ENCODE measurements at regions of chr1 and their contacts with region 1.

Region 1: GRCh38 chr1:200409761-200410565 is at the start of gene ZNF281:
- DNase-seq: peak; percentile 89 to 95 (median 93)
- ATAC-seq: peak; percentile 99
- H3K4me3 ChIP-seq: peak within 1 kb of the TSS; percentile 69
- H3K4me3 Mint-ChIP-seq: peak within 1 kb of the TSS; percentile 93 to 100 (median 98)
- H3K27ac ChIP-seq: peak within 1 kb of the TSS; percentile 86
- H3K27ac Mint-ChIP-seq: peak within 1 kb of the TSS; percentile 92 to 99 (median 97)
- H3K4me1 ChIP-seq: peaks cover 36 to 37% of the 10 kb centered on the region in 2 donors
- H3K4me1 Mint-ChIP-seq: peaks cover 36 to 63% (median 54%) of the 10 kb centered on the region in 7 donors
- H3K27me3 ChIP-seq: no peaks in the 10 kb centered on the region
- H3K27me3 Mint-ChIP-seq: peaks cover 0 to 12% (median 0%) of the 10 kb centered on the region in 5 donors
- total RNA-seq, gene ZNF281: 16.3 to 27.6 (median 25.8) TPM

Region 2: DNA sequence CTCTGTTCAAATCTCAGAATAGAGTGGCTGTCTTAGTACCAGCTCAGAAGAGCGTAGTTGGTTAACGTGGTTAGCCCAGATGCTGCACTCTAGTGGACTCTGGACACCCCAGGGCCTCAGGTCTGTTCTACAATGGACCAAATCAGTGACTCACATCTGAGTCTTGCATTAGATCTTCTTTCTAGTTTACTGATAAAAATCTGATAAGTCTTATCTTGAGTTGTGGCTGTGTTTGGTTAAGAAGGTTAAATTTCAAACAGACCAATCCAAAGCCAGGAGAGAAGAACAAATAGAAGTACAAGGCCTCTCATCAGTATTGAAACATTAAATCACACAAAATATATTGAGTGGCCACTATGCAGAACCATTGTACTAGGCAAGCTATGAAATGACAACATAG is 278.3 kb before region 1 on chr1:
- CTCF ChIA-PET with region 1: no interaction called
- POLR2A ChIA-PET with region 1: no interaction called
- intact Hi-C with region 1: no loop called
- DNase-seq: no peak
- ATAC-seq: peak; percentile 51
- H3K4me3 ChIP-seq: no peak overlapping the region
- H3K4me3 Mint-ChIP-seq: no peak overlapping the region
- H3K27ac ChIP-seq: no peak overlapping the region
- H3K27ac Mint-ChIP-seq: peak overlapping the region in 1 of 9 donors; percentile 32
- H3K4me1 ChIP-seq: peaks cover 6 to 18% of the 10 kb centered on the region in 2 donors
- H3K4me1 Mint-ChIP-seq: peaks cover 0 to 20% (median 14%) of the 10 kb centered on the region in 7 donors
- H3K27me3 ChIP-seq: no peaks in the 10 kb centered on the region
- H3K27me3 Mint-ChIP-seq: peaks cover 0 to 5% (median 0%) of the 10 kb centered on the region in 5 donors

Region 3: DNA sequence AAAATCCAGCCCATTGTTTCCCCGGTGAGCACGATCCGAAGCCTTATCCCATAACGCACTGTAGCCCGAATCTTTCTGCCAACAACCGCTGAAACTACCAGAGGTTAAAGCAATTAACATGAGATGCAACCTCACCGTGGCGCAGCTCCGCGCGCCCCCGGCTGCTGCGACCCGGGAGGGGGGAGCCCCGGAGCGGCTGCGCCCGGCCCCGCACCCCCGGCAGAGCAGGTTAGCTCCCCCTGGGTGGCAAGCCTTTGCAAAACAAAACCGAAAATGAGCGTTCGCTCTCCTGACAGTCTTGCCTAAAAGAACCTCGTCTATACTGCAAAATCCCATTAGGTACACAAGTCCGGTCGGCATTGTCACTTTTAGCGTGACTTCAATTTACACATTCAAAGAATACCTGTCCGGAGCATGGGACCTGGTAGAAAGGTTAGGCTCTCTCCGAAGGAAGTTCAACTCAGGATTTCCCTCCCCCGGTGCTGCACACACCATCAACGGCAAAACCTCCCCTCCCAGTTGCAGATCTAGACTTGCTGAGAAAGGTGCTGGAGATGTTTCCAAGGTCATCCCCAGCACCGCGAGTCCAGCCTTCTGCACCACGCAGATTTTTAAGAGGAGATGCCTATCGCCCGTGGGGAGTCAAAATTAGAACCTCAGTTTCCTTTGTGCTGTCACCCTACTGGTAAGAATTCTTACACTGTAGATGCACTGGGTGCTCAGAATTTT is 107.6 kb before region 1 on chr1:
- CTCF ChIA-PET with region 1: interaction called, 4 read pairs
- POLR2A ChIA-PET with region 1: interaction called, 4 read pairs
- intact Hi-C with region 1: loop called (anchors 1 to 5 kb)
- DNase-seq: peak; percentile 57 to 81 (median 74)
- ATAC-seq: peak; percentile 97
- H3K4me3 ChIP-seq: peak overlapping the region; percentile 95
- H3K4me3 Mint-ChIP-seq: peak overlapping the region; percentile 84 to 95 (median 94)
- H3K27ac ChIP-seq: peak overlapping the region; percentile 74
- H3K27ac Mint-ChIP-seq: peak overlapping the region; percentile 59 to 97 (median 93)
- H3K4me1 ChIP-seq: peaks cover 12 to 15% of the 10 kb centered on the region in 2 donors
- H3K4me1 Mint-ChIP-seq: peaks cover 4 to 42% (median 22%) of the 10 kb centered on the region in 7 donors
- H3K27me3 ChIP-seq: no peaks in the 10 kb centered on the region
- H3K27me3 Mint-ChIP-seq: peaks cover 0 to 37% (median 0%) of the 10 kb centered on the region in 5 donors

Region 4: DNA sequence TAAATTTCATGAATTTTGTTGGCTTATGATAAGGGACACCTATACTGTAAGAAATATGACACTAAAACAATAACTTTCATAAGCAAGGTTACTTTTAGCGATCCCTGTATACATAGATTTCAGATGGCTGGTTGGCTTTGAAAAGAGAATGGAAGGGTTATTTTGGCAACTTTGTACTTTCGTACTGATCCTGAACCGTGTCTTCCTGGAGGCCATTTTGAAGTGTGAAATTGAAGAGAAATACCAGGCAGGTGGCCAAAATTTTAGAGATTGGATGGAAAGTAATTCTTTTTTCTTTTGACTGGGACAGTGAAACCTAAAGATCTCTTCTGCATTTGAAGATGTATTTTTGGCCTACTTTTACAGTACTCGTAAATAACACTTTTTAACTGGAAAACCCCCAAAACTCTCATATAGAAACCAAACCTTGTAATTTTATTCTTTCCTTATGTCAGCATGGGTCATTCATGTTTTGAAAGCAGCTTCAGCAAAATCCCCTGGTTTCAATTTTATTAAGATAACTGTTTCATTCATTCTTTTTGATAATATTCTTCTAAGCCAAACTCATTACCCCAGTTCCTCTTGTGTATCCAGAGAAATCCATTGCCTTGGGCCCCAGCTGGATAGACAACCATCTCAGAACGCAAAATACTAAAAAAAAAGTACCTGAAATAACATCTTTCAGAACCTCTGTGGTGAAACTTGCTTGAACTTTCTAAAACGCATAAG is 38.2 kb after region 1 on chr1:
- CTCF ChIA-PET with region 1: no interaction called
- POLR2A ChIA-PET with region 1: no interaction called
- intact Hi-C with region 1: loop called in 1 of 2 experiments (anchors 5 kb)
- DNase-seq: no peak
- ATAC-seq: no peak
- H3K4me3 ChIP-seq: no peak overlapping the region
- H3K4me3 Mint-ChIP-seq: peak overlapping the region in 1 of 10 donors; percentile 18
- H3K27ac ChIP-seq: no peak overlapping the region
- H3K27ac Mint-ChIP-seq: peak overlapping the region in 1 of 9 donors; percentile 79
- H3K4me1 ChIP-seq: no peaks in the 10 kb centered on the region
- H3K4me1 Mint-ChIP-seq: peaks cover 0 to 12% (median 0%) of the 10 kb centered on the region in 7 donors
- H3K27me3 ChIP-seq: no peaks in the 10 kb centered on the region
- H3K27me3 Mint-ChIP-seq: no peaks in the 10 kb centered on the region

Region 5: GRCh38 chr1:200488375-200489165 is 78.6 kb after region 1 on chr1:
- CTCF ChIA-PET with region 1: no interaction called
- POLR2A ChIA-PET with region 1: no interaction called
- intact Hi-C with region 1: loop called in 1 of 2 experiments (anchors 2 kb)
- DNase-seq: peak in 8 of 9 donors; percentile 38 to 61 (median 56)
- ATAC-seq: peak; percentile 67
- H3K4me3 ChIP-seq: no peak overlapping the region
- H3K4me3 Mint-ChIP-seq: no peak overlapping the region
- H3K27ac ChIP-seq: no peak overlapping the region
- H3K27ac Mint-ChIP-seq: peak overlapping the region in 1 of 9 donors; percentile 79
- H3K4me1 ChIP-seq: no peaks in the 10 kb centered on the region
- H3K4me1 Mint-ChIP-seq: peaks cover 0 to 14% (median 0%) of the 10 kb centered on the region in 7 donors
- H3K27me3 ChIP-seq: no peaks in the 10 kb centered on the region
- H3K27me3 Mint-ChIP-seq: peaks cover 0 to 29% (median 11%) of the 10 kb centered on the region in 5 donors

Region 6: DNA sequence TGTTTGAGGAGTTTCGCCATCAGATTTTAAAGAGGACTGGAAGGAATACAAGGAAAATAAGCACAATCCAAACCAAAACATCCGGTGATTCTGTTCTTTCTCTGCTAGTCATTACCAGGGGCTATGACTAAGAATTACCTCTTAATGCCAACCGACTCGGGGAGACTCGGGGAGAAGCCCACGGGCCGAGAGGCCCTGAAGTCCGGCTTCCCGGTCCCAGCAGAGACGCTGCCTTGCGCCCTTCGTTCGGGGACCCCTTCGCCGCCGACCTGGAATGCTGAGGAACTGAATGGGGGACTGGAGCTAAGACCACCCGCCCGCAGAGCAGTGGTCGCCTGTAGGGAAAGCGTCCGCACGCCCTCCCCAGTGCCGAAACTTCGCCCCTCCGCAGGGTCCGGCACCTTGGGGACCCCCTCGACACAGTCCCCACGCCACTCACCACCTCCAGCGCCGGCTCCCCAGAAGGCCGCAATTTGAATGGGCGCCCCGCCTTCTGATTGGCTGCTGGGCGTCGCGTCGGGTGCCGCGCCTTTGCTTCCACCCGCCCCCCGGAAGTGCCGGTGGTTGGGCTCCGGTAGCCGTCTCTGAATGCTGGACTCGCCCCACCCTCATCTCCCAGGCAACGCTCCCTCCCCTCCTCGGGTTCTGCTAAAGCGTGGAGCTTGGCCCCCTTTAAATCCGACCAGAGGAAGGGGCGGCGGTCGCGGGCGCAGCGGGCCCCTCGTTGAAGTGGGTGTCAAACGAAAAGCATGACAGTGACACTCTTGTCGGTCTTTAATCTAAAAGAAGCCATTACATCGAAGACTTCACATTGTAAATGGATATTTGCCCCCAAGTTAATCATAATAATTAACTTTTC is 210.5 kb after region 1 on chr1 and contains the start of gene KIF14:
- CTCF ChIA-PET with region 1: no interaction called
- POLR2A ChIA-PET with region 1: no interaction called
- intact Hi-C with region 1: loop called in 1 of 2 experiments (anchors 1 kb)
- DNase-seq: peak; percentile 81 to 94 (median 89)
- ATAC-seq: peak; percentile 99
- H3K4me3 ChIP-seq: peak within 1 kb of the TSS; percentile 58
- H3K4me3 Mint-ChIP-seq: peak within 1 kb of the TSS; percentile 86 to 99 (median 96)
- H3K27ac ChIP-seq: peak within 1 kb of the TSS; percentile 67
- H3K27ac Mint-ChIP-seq: peak within 1 kb of the TSS; percentile 74 to 96 (median 93)
- H3K4me1 ChIP-seq: peaks cover 6% of the 10 kb centered on the region in 2 donors
- H3K4me1 Mint-ChIP-seq: peaks cover 0 to 56% (median 15%) of the 10 kb centered on the region in 7 donors
- H3K27me3 ChIP-seq: peaks cover 0 to 4% of the 10 kb centered on the region in 2 donors
- H3K27me3 Mint-ChIP-seq: no peaks in the 10 kb centered on the region
- total RNA-seq, gene KIF14: 0.16 to 16.2 (median 0.42) TPM in 3 of 5 experiments, not detected in the others

Region 7: DNA sequence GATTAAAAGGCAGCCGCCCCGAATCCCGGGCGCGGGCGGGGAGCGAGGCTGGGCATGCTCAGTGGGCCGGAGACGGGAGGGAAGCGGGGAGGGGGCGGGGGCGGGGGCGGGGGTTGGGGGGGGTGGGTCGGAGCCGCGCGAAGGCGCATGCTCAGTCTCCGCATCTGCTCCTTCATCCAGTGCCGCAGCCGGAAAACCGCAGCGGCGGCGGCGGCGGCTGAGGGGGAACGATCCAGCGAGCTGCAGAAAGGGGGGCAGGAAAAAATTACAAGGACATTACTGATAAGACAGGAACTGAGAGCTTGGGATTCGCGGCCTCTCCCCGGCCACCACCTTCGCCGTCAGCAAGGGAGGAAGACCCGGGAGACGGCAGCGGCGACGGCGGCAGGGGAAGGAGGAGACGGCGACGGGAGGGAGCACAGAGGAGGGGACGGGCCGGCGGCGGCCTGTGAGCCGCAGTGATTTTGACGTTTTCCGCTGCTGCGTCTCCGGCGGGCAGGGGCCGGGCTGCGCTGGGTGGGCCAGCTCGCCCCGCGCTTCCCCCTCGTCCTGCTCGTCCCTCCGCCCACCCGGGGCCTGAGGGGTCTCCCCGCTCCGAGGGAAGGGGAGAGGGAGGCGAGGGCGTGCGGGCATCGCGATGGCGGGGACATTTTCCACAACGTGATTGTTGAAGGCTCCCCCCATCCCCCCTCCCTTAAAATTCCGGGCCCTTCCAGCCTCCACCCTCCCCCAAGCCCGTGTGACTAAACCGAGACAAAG is 329.0 kb after region 1 on chr1 and contains the start of gene CAMSAP2:
- CTCF ChIA-PET with region 1: no interaction called
- POLR2A ChIA-PET with region 1: no interaction called
- intact Hi-C with region 1: loop called in 1 of 2 experiments (anchors 1 kb)
- DNase-seq: peak; percentile 43 to 76 (median 69)
- ATAC-seq: peak; percentile 80
- H3K4me3 ChIP-seq: peak within 1 kb of the TSS; percentile 74
- H3K4me3 Mint-ChIP-seq: peak within 1 kb of the TSS; percentile 85 to 99 (median 98)
- H3K27ac ChIP-seq: peak within 1 kb of the TSS; percentile 75
- H3K27ac Mint-ChIP-seq: peak within 1 kb of the TSS; percentile 78 to 97 (median 93)
- H3K4me1 ChIP-seq: peaks cover 5 to 23% of the 10 kb centered on the region in 2 donors
- H3K4me1 Mint-ChIP-seq: peaks cover 16 to 49% (median 41%) of the 10 kb centered on the region in 7 donors
- H3K27me3 ChIP-seq: no peaks in the 10 kb centered on the region
- H3K27me3 Mint-ChIP-seq: peaks cover 0 to 45% (median 0%) of the 10 kb centered on the region in 5 donors
- total RNA-seq, gene CAMSAP2: 0.36 to 11.4 (median 5.5) TPM

Region 8: DNA sequence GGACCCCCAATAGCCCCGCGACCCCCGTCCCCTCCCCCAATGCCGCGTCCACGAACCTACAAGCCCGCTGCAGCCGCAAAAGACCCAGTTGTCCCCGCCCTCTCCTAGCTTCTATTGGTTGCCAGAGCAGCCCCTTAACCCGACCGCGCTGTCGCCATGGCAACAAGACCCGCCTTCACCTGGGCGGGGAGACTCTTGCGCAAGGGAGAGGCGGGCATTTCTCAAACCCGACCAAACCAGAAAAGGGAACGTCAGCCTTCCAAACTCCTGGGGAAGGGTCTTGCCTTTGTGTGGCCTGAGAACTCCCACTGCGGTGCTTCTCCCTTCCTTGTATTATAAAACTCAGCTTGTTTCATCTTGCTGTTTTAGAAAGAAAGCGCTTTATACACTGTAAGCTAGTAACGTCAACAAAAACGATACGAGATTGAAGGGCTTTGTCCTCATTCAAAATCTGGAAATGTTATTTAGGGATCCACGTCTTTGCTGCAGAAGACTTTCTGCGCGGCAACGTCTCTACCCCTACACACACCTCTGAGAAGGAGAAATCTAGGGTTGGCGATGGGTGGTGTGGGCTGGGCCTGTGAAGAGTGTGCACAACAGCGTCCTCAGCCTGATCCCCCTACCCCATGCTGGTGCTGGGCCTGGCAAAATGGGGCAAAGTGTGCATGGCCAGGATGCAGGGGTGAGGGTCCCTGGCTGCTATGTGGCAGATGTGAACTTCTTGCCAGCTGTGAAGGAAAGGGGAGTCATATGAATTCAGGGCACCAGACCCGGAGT is 744.6 kb after region 1 on chr1 and contains the start of gene TMEM9:
- CTCF ChIA-PET with region 1: no interaction called
- POLR2A ChIA-PET with region 1: no interaction called
- intact Hi-C with region 1: loop called in 1 of 2 experiments (anchors 10 kb)
- DNase-seq: peak; percentile 94 to 99 (median 97)
- ATAC-seq: peak; percentile 97
- H3K4me3 ChIP-seq: peak within 1 kb of the TSS; percentile 48
- H3K4me3 Mint-ChIP-seq: peak within 1 kb of the TSS; percentile 86 to 94 (median 93)
- H3K27ac ChIP-seq: peak within 1 kb of the TSS; percentile 65
- H3K27ac Mint-ChIP-seq: peak within 1 kb of the TSS; percentile 83 to 96 (median 91)
- H3K4me1 ChIP-seq: peaks cover 7 to 14% of the 10 kb centered on the region in 2 donors
- H3K4me1 Mint-ChIP-seq: peaks cover 12 to 36% (median 20%) of the 10 kb centered on the region in 7 donors
- H3K27me3 ChIP-seq: no peaks in the 10 kb centered on the region
- H3K27me3 Mint-ChIP-seq: peaks cover 6 to 25% (median 9%) of the 10 kb centered on the region in 5 donors
- total RNA-seq, gene TMEM9: 15.3 to 24.5 (median 16.7) TPM